B cell (primary cell): ENCODE measurements at regions of chr3 and their contacts with region 1.

Region 1: DNA sequence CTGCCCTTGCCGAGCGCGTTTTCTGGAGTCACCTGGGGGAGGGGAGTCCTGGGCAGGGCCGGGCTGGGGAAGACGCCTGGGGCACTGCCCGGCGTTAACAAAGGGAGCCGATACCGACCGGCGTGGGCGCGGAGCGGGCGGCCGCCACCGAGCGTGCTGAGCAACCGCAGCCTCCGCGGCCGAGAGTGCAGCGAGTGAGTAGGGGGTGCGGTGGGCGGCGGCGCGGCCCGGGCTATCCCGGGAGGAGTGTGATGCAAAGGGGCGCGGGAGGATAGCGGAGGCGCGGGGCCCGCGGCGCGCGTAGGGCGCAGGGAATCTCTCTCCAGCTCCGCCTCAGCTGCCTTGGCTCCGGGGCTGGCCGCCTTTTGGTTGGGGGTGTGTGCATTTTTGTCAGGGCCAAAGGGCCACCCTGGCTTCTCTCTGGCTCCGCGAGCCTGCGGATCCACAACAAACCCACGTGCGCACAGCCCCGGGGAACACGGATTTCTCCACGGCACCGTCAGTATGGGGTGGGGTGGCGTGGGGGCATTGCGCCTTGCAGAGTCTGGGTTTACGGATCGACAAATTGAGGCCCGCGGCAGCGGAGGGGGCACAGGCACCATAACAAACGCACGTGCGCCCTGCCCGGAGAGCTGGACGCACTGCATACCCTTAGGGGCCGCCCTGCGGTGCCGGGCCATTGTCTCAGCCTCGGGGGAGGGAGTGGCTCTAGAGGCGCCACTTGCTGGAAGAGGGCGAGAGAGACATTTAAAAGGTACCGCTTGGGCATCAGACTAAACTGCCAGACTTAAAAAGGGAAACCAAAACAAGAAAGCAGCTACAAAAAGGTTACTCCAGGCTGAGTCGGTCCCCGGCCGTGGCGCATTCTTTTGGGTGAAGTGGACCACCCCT is 560 bp downstream of the ST6GAL1 start:
- DNase-seq: peak; percentile 89
- ATAC-seq: peak; percentile 84
- H3K4me3 ChIP-seq: peak overlapping the region; percentile 84 to 94 (median 91)
- H3K4me3 Mint-ChIP-seq: peak overlapping the region; percentile 100
- H3K27ac ChIP-seq: peak overlapping the region; percentile 79 to 83
- H3K27ac Mint-ChIP-seq: peak overlapping the region; percentile 98
- H3K4me1 ChIP-seq: peaks cover 26 to 40% of the 10 kb centered on the region in 2 donors
- H3K4me1 Mint-ChIP-seq: peaks cover 58% of the 10 kb centered on the region
- H3K27me3 ChIP-seq: no peaks in the 10 kb centered on the region
- H3K27me3 Mint-ChIP-seq: no peaks in the 10 kb centered on the region
- CTCF ChIP-seq: peak; percentile 47

Region 2: DNA sequence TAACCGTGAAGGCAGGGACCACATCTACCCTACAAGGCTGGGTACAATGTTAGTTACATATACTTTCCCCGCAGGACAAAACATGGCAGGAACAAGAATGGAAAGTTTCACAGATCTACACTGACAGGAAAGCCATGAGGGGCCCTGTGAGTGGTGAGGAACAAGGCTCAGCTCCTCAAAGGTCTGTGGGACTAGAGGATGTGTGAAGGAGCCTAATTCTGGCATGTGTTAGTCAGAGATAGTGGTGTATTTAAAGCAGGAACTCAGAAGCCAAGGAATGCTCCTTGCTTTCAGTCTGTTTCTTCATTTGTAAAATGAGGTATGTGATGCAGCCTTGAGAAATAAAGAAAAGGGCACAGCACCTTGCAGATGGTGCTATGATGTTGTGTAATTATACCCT is 847.1 kb before region 1 on chr3:
- CTCF ChIA-PET with region 1: no interaction called
- POLR2A ChIA-PET with region 1: no interaction called
- intact Hi-C with region 1: no loop called
- DNase-seq: no peak
- ATAC-seq: no peak
- H3K4me3 ChIP-seq: no peak overlapping the region
- H3K4me3 Mint-ChIP-seq: no peak overlapping the region
- H3K27ac ChIP-seq: no peak overlapping the region
- H3K27ac Mint-ChIP-seq: no peak overlapping the region
- H3K4me1 ChIP-seq: no peaks in the 10 kb centered on the region
- H3K4me1 Mint-ChIP-seq: no peaks in the 10 kb centered on the region
- H3K27me3 ChIP-seq: no peaks in the 10 kb centered on the region
- H3K27me3 Mint-ChIP-seq: no peaks in the 10 kb centered on the region
- CTCF ChIP-seq: no peak

Region 3: GRCh38 chr3:186361762-186362536 is 568.9 kb before region 1 on chr3 and contains the start of gene DGKG:
- CTCF ChIA-PET with region 1: no interaction called
- POLR2A ChIA-PET with region 1: no interaction called
- intact Hi-C with region 1: no loop called
- DNase-seq: peak; percentile 76
- ATAC-seq: peak; percentile 81
- H3K4me3 ChIP-seq: peak within 1 kb of the TSS; percentile 52 to 65 (median 58)
- H3K4me3 Mint-ChIP-seq: peak within 1 kb of the TSS; percentile 87
- H3K27ac ChIP-seq: peak within 1 kb of the TSS in 1 of 2 donors; percentile 9
- H3K27ac Mint-ChIP-seq: peak within 1 kb of the TSS; percentile 67
- H3K4me1 ChIP-seq: peaks cover 19 to 22% of the 10 kb centered on the region in 2 donors
- H3K4me1 Mint-ChIP-seq: peaks cover 24% of the 10 kb centered on the region
- H3K27me3 ChIP-seq: peaks cover 0 to 34% (median 11%) of the 10 kb centered on the region in 4 experiments
- H3K27me3 Mint-ChIP-seq: peaks cover 7% of the 10 kb centered on the region
- CTCF ChIP-seq: no peak
- total RNA-seq, gene DGKG: 10.9 and 11.6 TPM in 2 replicates

Region 4: DNA sequence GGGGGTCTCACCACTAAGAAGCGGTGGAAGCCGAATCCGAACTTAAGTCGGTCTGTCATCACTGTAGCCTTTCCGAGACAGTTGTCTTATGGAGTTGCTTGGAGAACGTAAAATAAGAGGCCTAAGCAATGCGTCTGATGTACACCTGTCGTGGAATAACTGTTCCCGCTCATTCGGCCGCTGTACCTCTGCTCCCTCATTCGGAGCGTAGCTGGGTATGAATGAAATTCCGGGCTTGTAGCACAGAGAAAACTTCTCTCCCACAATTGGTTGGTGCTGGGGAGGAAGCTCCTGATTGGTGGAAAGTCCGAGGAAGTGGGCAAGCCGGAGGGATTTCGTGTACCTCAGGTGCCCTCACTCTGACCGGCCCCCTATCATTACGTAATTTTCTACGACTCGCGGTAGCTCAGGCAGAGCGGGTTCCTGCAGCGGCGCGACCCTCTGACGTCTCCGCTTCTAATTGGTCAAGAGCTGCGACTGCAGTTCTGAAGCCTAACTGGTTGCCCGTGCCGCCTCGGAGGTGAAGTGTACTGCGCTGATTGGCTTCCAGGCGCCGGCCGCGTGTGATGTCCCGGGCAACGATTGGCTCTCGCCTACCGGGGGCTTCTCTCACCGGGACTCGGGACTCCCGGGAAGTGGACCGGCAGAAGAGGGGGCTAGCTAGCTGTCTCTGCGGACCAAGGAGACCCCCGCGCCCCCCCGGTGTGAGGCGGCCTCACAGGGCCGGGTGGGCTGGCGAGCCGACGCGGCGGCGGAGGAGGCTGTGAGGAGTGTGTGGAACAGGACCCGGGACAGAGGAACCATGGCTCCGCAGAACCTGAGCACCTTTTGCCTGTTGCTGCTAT is 360.6 kb before region 1 on chr3 and contains the start of gene DNAJB11:
- CTCF ChIA-PET with region 1: no interaction called
- POLR2A ChIA-PET with region 1: no interaction called
- intact Hi-C with region 1: loop called (anchors 2 kb)
- DNase-seq: peak; percentile 99
- ATAC-seq: peak; percentile 85
- H3K4me3 ChIP-seq: peak within 1 kb of the TSS; percentile 86 to 98 (median 90)
- H3K4me3 Mint-ChIP-seq: peak within 1 kb of the TSS; percentile 98
- H3K27ac ChIP-seq: peak within 1 kb of the TSS; percentile 91 to 96
- H3K27ac Mint-ChIP-seq: peak within 1 kb of the TSS; percentile 98
- H3K4me1 ChIP-seq: peaks cover 28 to 40% of the 10 kb centered on the region in 2 donors
- H3K4me1 Mint-ChIP-seq: peaks cover 51% of the 10 kb centered on the region
- H3K27me3 ChIP-seq: no peaks in the 10 kb centered on the region
- H3K27me3 Mint-ChIP-seq: no peaks in the 10 kb centered on the region
- CTCF ChIP-seq: no peak
- total RNA-seq, gene DNAJB11: 27.7 and 28.5 TPM in 2 replicates

Region 5: GRCh38 chr3:186909078-186909853 is 21.6 kb before region 1 on chr3:
- CTCF ChIA-PET with region 1: interaction called, 13 read pairs
- POLR2A ChIA-PET with region 1: interaction called, 16 read pairs
- intact Hi-C with region 1: loop called (anchors 1 kb)
- DNase-seq: peak; percentile 72
- ATAC-seq: peak; percentile 95
- H3K4me3 ChIP-seq: peak overlapping the region in 3 of 5 experiments; percentile 8 to 47 (median 30)
- H3K4me3 Mint-ChIP-seq: peak overlapping the region; percentile 78
- H3K27ac ChIP-seq: peak overlapping the region; percentile 74
- H3K27ac Mint-ChIP-seq: peak overlapping the region; percentile 94
- H3K4me1 ChIP-seq: peaks cover 17 to 18% of the 10 kb centered on the region in 2 donors
- H3K4me1 Mint-ChIP-seq: peaks cover 35% of the 10 kb centered on the region
- H3K27me3 ChIP-seq: no peaks in the 10 kb centered on the region
- H3K27me3 Mint-ChIP-seq: no peaks in the 10 kb centered on the region
- CTCF ChIP-seq: no peak

Region 6: GRCh38 chr3:186979837-186980236 is 49.0 kb after region 1 on chr3:
- CTCF ChIA-PET with region 1: interaction called, 15 read pairs
- POLR2A ChIA-PET with region 1: no interaction called
- intact Hi-C with region 1: no loop called
- DNase-seq: no peak
- ATAC-seq: no peak
- H3K4me3 ChIP-seq: no peak overlapping the region
- H3K4me3 Mint-ChIP-seq: no peak overlapping the region
- H3K27ac ChIP-seq: peak overlapping the region in 1 of 2 donors; percentile 34
- H3K27ac Mint-ChIP-seq: peak overlapping the region; percentile 81
- H3K4me1 ChIP-seq: peaks cover 19 to 40% of the 10 kb centered on the region in 2 donors
- H3K4me1 Mint-ChIP-seq: peaks cover 63% of the 10 kb centered on the region
- H3K27me3 ChIP-seq: no peaks in the 10 kb centered on the region
- H3K27me3 Mint-ChIP-seq: no peaks in the 10 kb centered on the region
- CTCF ChIP-seq: no peak

Region 7: GRCh38 chr3:187041362-187042307 is 110.7 kb after region 1 on chr3:
- CTCF ChIA-PET with region 1: interaction called, 3 read pairs
- POLR2A ChIA-PET with region 1: no interaction called
- intact Hi-C with region 1: loop called (anchors 2 kb)
- DNase-seq: peak; percentile 70
- ATAC-seq: peak; percentile 79
- H3K4me3 ChIP-seq: peak overlapping the region in 1 of 5 experiments; percentile 31
- H3K4me3 Mint-ChIP-seq: peak overlapping the region; percentile 75
- H3K27ac ChIP-seq: peak overlapping the region; percentile 89 to 92
- H3K27ac Mint-ChIP-seq: peak overlapping the region; percentile 90
- H3K4me1 ChIP-seq: peaks cover 83 to 84% of the 10 kb centered on the region in 2 donors
- H3K4me1 Mint-ChIP-seq: peaks cover 84% of the 10 kb centered on the region
- H3K27me3 ChIP-seq: no peaks in the 10 kb centered on the region
- H3K27me3 Mint-ChIP-seq: no peaks in the 10 kb centered on the region
- CTCF ChIP-seq: no peak

Region 8: GRCh38 chr3:187139126-187139894 is 208.4 kb after region 1 on chr3 and contains the start of gene RPL39L:
- CTCF ChIA-PET with region 1: interaction called, 5 read pairs
- POLR2A ChIA-PET with region 1: no interaction called
- intact Hi-C with region 1: loop called (anchors 1 kb)
- DNase-seq: peak; percentile 95
- ATAC-seq: peak; percentile 95
- H3K4me3 ChIP-seq: peak within 1 kb of the TSS in 4 of 5 experiments; percentile 49 to 68 (median 58)
- H3K4me3 Mint-ChIP-seq: peak within 1 kb of the TSS; percentile 90
- H3K27ac ChIP-seq: peak within 1 kb of the TSS; percentile 77 to 79
- H3K27ac Mint-ChIP-seq: peak within 1 kb of the TSS; percentile 90
- H3K4me1 ChIP-seq: peaks cover 12 to 14% of the 10 kb centered on the region in 2 donors
- H3K4me1 Mint-ChIP-seq: peaks cover 16% of the 10 kb centered on the region
- H3K27me3 ChIP-seq: no peaks in the 10 kb centered on the region
- H3K27me3 Mint-ChIP-seq: no peaks in the 10 kb centered on the region
- CTCF ChIP-seq: peak; percentile 79
- total RNA-seq, gene RPL39L: 2.0 and 3.1 TPM in 2 replicates